Activated CD4-positive, alpha-beta memory T cell treated with anti-CD3 and anti-CD28 coated beads for 36 hours (primary cell): ENCODE measurements at regions of chr2 and their contacts with region 1.

Region 1: DNA sequence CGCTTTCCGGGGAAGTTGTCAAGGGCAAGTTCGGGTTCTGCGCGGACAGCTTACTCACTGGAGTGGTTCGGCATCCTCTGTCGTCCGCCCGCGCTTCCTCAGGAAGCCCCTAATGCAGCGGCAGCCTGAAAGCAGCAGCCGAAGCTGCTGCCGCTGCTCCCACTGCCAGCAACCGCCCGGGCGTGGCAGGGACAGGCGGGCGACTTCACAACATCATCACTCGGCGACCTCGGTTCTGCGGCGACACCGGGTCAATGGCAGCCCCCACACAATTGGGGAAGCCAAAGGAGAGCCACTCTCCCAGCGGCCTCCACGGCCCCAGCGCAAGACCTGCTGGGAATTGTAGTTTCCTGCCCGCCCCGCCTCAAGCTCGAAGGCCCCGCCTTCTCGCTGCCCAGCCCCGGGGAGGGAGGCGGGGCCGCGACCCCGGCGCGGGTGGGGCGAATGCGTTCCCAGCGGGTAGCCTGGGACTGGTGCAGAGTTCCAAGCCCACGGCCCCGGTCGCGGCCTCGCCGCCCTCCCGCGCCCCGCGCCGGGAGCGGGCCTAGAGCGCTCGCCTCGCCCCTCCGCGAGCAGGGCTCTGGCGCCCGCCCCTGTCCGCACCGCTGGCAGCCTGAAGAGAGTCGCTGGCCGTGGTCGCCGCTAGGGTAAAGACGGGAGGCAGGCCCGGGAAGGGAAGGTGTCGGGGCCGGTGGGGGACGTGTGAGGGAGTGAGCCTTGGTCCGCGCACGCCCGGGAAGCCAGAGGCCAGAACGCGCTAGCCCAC is at the starts of genes STRADB and TRAK2:
- DNase-seq: peak; percentile 98
- H3K4me3 Mint-ChIP-seq: peak within 1 kb of the TSS; percentile 96
- H3K27ac Mint-ChIP-seq: peak within 1 kb of the TSS; percentile 97
- H3K4me1 Mint-ChIP-seq: peaks cover 44% of the 10 kb centered on the region
- H3K27me3 Mint-ChIP-seq: no peaks in the 10 kb centered on the region
- total RNA-seq, gene STRADB: 18.5 to 19.8 TPM
- total RNA-seq, gene TRAK2: 23.5 to 26.0 TPM

Region 2: GRCh38 chr2:199911052-199911876 is 1540.2 kb before region 1 on chr2 and contains the start of gene C2orf69:
- CTCF ChIA-PET with region 1: no interaction called
- POLR2A ChIA-PET with region 1: no interaction called
- intact Hi-C with region 1: loop called (anchors 2 kb)
- DNase-seq: peak; percentile 97
- H3K4me3 Mint-ChIP-seq: peak within 1 kb of the TSS; percentile 88
- H3K27ac Mint-ChIP-seq: peak within 1 kb of the TSS; percentile 77
- H3K4me1 Mint-ChIP-seq: peaks cover 30% of the 10 kb centered on the region
- H3K27me3 Mint-ChIP-seq: no peaks in the 10 kb centered on the region
- total RNA-seq, gene C2orf69: 17.9 to 18.9 TPM

Region 3: DNA sequence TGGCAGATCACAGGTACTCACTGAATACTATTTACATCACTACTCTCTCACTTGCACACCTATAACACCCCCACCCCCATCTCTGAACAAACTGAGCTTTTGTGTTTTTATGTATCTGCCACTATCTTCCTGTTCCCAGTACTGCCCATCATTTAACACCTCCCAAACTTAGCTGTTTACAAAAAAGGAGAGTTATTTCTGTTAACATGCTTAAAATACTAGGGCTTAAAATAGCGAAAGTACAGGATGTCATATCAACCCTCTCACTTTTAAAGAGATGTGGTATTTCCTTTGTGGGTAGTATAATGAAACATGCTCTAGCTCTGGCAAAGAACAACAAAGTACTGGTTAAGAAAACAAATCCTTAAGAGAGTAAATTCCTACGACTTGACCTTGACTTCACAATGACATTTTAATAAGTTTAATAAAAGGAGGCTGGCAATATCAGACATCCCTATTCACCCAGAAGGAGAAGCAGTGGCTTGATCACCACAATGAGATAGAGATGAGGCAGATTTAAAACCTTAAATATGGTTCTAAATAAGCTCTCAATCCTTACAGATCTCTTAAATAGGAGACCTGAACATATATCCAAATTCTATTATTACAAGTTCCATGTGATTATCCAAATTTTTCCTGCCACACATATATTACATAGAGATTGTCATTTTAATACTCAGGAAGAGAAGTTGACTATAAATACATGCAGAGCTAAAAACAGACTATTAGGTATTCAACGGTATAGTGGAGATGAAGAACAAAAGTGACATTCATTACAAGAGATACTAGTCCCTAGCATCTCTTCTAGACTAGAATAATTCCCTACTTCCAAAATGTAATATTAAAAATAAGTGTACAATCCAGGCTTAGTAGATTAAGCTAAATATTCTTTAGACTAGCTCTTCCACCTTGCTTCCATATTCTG is 37.1 kb before region 1 on chr2:
- CTCF ChIA-PET with region 1: interaction called, 7 read pairs
- POLR2A ChIA-PET with region 1: interaction called, 5 read pairs
- intact Hi-C with region 1: loop called (anchors 2 kb)
- DNase-seq: no peak
- H3K4me3 Mint-ChIP-seq: no peak overlapping the region
- H3K27ac Mint-ChIP-seq: no peak overlapping the region
- H3K4me1 Mint-ChIP-seq: peaks cover 29% of the 10 kb centered on the region
- H3K27me3 Mint-ChIP-seq: no peaks in the 10 kb centered on the region

Region 4: GRCh38 chr2:201432038-201432620 is 19.3 kb before region 1 on chr2:
- CTCF ChIA-PET with region 1: interaction called, 13 read pairs
- POLR2A ChIA-PET with region 1: interaction called, 9 read pairs
- intact Hi-C with region 1: loop called (anchors 1 kb)
- DNase-seq: no peak
- H3K4me3 Mint-ChIP-seq: peak overlapping the region; percentile 51
- H3K27ac Mint-ChIP-seq: peak overlapping the region; percentile 93
- H3K4me1 Mint-ChIP-seq: peaks cover 46% of the 10 kb centered on the region
- H3K27me3 Mint-ChIP-seq: no peaks in the 10 kb centered on the region

Region 5: DNA sequence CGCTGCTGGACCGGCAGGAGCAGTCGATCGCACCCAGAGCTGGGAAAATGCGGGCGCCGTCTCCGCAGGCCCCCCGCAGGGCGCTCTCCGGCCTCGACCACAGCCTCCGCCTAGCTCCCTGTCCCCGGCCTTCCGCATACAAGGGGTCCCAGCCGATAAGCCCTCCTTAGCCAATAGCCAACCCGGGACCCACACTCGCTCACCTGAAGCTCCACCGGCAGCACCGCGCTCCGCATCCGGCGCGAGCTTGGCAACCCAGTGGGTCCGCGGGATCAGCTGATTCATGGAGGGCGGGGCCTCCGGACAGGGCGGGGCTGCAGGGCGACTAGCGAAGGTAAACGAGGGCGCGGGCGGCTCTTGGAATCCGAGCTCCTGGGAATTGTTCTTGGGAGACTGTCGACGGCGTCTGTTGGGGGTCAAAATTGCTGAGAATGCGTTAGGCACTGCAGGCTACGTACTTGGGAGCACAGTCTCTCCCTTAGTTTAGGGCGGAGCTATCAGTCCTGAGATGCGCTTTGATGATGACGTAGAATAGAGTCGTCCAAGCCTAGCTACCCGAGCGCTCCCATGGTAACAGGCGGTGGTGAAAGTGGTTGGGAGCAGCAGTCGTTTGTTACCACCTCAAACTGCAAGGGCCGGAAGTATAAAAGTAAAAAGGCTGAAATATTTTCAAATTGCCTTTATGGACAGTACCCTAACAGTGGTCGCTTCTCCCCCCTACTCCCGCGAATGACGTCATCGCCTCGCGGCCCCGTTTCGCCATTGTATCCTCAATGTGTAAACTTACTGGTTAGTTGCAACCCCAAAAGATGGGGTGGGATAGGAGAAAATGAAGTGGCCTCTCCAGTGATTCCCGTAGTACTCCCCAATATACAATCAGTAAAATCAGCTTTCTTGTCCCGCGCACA is 329.5 kb after region 1 on chr2 and contains the start of gene ALS2:
- CTCF ChIA-PET with region 1: no interaction called
- POLR2A ChIA-PET with region 1: no interaction called
- intact Hi-C with region 1: loop called (anchors 5 kb)
- DNase-seq: peak; percentile 96
- H3K4me3 Mint-ChIP-seq: peak within 1 kb of the TSS; percentile 98
- H3K27ac Mint-ChIP-seq: peak within 1 kb of the TSS; percentile 93
- H3K4me1 Mint-ChIP-seq: peaks cover 15% of the 10 kb centered on the region
- H3K27me3 Mint-ChIP-seq: peaks cover 3% of the 10 kb centered on the region
- total RNA-seq, gene ALS2: 11.0 to 12.6 TPM

Region 6: DNA sequence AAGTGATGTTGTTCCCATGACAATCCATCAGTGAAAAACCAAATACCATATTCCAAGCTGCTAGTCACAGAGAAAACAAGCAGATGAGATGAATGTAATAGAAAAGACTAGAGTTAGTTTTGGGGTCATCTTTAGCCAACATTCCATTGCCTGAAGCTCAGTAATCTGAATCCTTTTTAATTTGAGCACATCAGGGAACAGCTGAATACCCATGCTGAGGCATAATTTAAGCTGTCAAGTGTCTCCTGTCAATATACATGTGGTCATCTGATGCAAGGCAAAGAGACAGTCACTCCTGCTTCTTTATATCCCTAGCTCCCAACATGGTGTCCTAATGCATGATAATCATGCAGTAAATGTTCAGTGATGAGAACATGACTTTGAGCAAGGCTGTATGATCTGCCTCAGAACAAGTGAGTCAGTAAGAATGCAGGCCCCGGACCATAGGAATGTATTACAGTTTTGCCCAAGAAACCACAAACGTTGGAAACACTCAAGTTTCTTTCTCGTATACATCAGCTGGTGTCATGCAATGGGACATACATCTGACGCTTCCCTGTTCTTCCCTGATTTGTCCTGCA is 402.8 kb after region 1 on chr2:
- CTCF ChIA-PET with region 1: no interaction called
- POLR2A ChIA-PET with region 1: no interaction called
- intact Hi-C with region 1: no loop called
- DNase-seq: no peak
- H3K4me3 Mint-ChIP-seq: no peak overlapping the region
- H3K27ac Mint-ChIP-seq: no peak overlapping the region
- H3K4me1 Mint-ChIP-seq: peaks cover 11% of the 10 kb centered on the region
- H3K27me3 Mint-ChIP-seq: peaks cover 9% of the 10 kb centered on the region